Posterior vena cava (tissue), 2 donors: ENCODE measurements at regions of chr11 and their contacts with region 1.

Region 1: GRCh38 chr11:44351006-44351660 is 41.2 kb upstream of the ALX4 start:
- DNase-seq: peak; percentile 40

Region 2: DNA sequence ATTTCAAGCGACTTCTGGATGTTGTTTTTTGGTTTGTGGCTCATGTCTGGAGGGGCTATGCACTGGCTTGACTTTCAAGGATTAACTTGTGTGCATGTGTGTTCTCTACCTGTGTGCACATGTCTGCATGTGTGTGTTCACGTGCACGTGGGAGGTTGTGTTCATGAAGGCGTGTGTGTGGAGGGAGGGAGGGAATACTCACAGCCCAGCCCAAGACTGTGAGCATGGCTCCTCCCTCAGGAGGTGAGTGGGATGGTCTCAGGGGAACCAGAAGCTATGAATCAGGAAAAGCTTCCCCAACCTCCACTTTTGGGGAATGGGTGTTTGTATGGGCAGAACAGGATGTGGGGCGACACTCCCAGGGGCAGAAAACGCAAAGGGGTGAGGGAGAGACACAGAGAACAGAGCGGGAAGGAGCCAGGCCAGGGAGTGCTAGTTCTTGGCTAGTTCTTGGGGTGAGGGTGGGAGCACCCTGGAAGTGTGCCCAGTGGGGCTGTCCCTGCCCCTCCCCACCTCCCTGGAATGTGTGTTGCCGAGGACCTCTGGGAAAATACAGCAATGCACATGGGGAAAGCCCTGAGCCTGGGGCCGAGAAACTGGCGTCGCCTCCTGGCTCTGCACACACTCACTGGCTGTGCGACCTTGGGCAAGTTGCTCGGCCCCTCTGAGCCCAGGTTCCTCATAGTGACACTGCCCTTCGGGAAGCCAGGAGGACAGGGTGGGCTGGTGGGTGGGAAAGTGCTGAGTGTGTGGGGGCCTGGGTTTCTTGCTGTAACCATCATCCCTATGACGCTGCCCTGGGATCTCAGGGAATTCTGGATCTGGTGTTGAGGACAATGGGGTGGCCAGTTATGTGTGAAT is 24.3 kb before region 1 on chr11:
- intact Hi-C with region 1: loop called in 1 of 2 experiments (anchors 1 kb)
- DNase-seq: no peak

Region 3: GRCh38 chr11:44519989-44520737 is 169.0 kb after region 1 on chr11:
- intact Hi-C with region 1: no loop called
- DNase-seq: no peak